ENCODE measurements at regions of chr13 and their contacts with region 1.

Region 1: GRCh38 chr13:30465585-30466357 is at the start of gene HMGB1:
- H3K4me3 ChIP-seq: peak within 1 kb of the TSS; percentile 46
- H3K27ac ChIP-seq: peak within 1 kb of the TSS; percentile 95
- H3K4me1 ChIP-seq: peaks cover 6% of the 10 kb centered on the region; the same call in 1 of the 2 replicates
- CTCF ChIP-seq: no peak

Region 2: DNA sequence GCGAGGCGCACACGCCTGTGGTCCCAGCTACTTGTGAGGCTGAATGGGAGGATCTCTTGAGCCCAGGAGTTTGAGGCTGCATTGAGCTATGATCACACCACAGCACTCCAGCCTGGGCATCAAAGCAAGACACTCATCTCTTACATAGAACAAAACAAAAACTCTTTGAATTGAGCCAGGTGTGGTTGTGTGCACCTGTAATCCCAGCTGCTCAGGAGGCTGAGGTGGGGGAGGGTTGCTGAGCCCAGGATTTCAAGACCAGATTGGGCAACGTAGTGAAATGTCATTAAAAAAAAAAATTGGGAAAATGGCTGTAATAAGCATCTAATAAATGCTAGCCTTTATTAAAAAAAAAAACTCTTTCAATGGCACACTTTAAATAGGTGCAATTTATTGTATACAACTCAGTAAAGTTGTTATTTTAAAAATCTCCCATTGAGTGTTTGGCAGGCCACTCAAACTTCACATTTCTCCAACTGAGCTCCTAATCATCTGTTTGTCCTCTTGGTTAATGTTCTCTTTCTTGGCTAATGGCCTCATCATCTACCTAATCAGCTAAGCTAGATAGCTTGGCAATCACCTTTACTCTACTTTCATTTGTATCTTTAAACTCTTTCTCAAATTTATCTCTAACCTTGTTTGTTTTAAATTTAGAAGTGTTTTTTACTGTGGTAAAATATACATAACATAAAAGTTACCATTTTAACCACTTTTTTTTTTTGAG is 28.0 kb after region 1 on chr13:
- CTCF ChIA-PET with region 1: no interaction called
- POLR2A ChIA-PET with region 1: no interaction called
- H3K4me3 ChIP-seq: no peak overlapping the region
- H3K27ac ChIP-seq: no peak overlapping the region
- H3K4me1 ChIP-seq: no peaks in the 10 kb centered on the region
- CTCF ChIP-seq: no peak

Region 3: DNA sequence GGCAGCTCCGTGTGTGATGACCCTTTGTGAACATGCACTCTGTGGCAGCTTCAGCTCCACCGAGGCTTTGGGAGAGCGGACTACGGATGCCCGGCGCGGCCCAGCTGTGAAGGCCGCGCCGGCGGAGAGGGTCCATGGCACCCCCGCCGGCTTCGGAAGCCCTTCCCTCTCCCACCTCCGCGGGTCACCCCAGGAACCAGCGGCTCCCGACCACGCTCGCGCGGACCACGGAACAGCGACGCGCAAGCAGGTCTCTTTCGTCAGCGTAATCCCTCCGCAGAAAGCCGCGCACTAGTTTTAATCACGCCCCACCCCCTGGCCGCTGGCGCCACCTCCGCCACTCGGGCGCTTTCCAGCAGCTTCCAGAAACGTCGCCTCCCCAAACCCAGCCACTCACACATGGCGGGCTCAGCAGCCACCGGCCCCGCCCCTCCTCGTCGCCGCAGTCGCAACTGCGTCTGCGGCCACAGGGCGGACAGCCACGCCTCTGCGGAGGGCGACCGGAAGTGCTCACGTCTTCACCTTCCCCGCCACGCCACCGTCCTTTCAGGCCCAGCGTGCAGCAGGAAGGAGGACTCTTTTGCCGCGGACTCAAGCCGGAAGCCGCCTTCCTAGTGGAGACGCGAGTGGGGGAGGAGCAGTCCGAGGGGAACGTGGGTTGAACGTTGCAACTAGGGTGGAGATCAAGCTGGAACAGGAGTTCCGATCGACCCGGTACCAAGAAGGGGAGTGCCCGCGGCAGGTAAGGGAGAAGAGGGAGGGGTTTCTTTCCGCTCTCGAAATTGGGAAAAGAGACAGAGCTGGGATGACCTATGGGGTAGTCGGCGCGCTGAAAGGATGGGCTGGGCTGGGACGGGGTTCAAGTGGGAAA is 151.8 kb after region 1 on chr13 and contains the start of gene USPL1:
- CTCF ChIA-PET with region 1: no interaction called
- POLR2A ChIA-PET with region 1: interaction called, 21 read pairs
- H3K4me3 ChIP-seq: peak within 1 kb of the TSS; percentile 95
- H3K27ac ChIP-seq: peak within 1 kb of the TSS; percentile 93
- H3K4me1 ChIP-seq: no peaks in the 10 kb centered on the region
- CTCF ChIP-seq: peak; percentile 89

Measured in HEK293 (cell line).